Activated naive CD4-positive, alpha-beta T cell treated with anti-CD3 and anti-CD28 coated beads for 36 hours (primary cell): ENCODE measurements at regions of chr12 and their contacts with region 1.

Region 1: GRCh38 chr12:113174461-113175384 is 10.6 kb downstream of the DDX54 start:
- DNase-seq: peak; percentile 86
- H3K4me3 Mint-ChIP-seq: no peak overlapping the region
- H3K27ac Mint-ChIP-seq: no peak overlapping the region
- H3K4me1 Mint-ChIP-seq: no peaks in the 10 kb centered on the region
- H3K27me3 Mint-ChIP-seq: no peaks in the 10 kb centered on the region

Region 2: GRCh38 chr12:113098446-113098896 is 76.3 kb before region 1 on chr12:
- CTCF ChIA-PET with region 1: interaction called, 25 read pairs
- intact Hi-C with region 1: no loop called
- DNase-seq: peak; percentile 88
- H3K4me3 Mint-ChIP-seq: no peak overlapping the region
- H3K27ac Mint-ChIP-seq: no peak overlapping the region
- H3K4me1 Mint-ChIP-seq: peaks cover 18% of the 10 kb centered on the region
- H3K27me3 Mint-ChIP-seq: no peaks in the 10 kb centered on the region

Region 3: GRCh38 chr12:113114447-113115178 is 60.1 kb before region 1 on chr12:
- CTCF ChIA-PET with region 1: no interaction called
- intact Hi-C with region 1: no loop called
- DNase-seq: no peak
- H3K4me3 Mint-ChIP-seq: no peak overlapping the region
- H3K27ac Mint-ChIP-seq: no peak overlapping the region
- H3K4me1 Mint-ChIP-seq: peaks cover 6% of the 10 kb centered on the region
- H3K27me3 Mint-ChIP-seq: no peaks in the 10 kb centered on the region

Region 4: GRCh38 chr12:113135178-113136127 is 39.3 kb before region 1 on chr12 and contains the start of gene RASAL1:
- CTCF ChIA-PET with region 1: interaction called, 11 read pairs
- intact Hi-C with region 1: no loop called
- DNase-seq: peak; percentile 90
- H3K4me3 Mint-ChIP-seq: peak within 1 kb of the TSS; percentile 70
- H3K27ac Mint-ChIP-seq: peak within 1 kb of the TSS; percentile 73
- H3K4me1 Mint-ChIP-seq: peaks cover 18% of the 10 kb centered on the region
- H3K27me3 Mint-ChIP-seq: no peaks in the 10 kb centered on the region
- total RNA-seq, gene RASAL1: 2.6 to 3.2 TPM

Region 5: DNA sequence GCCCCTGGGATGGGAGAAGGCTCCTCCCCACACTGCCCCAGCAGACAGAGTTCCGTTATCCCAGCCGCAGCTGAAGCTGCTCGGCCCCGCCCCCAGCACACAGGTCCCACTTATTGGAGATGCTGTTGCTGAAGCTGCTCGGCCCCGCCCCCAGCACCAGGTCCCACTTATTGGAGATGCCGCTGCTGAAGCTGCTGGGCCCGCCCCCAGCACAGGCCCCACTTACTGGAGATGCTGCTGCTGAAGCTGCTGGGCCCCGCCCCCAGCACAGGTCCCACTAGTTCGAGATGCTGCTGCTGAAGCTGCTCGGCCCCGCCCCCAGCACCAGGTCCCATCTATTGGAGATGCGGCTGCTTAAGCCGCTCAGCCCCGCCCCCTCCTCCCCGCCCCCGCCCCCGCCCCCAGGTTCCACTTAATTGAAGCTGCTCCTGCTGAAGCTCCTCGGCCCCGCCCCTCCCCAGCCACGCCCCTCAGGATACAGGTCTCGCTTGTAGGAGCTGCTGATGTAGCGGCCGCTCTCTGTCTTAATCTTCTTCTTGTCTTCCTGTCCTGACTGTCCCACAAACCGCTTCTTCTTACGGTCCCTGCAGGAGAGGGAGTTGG is 13.2 kb before region 1 on chr12:
- CTCF ChIA-PET with region 1: interaction called, 12 read pairs
- intact Hi-C with region 1: no loop called
- DNase-seq: no peak
- H3K4me3 Mint-ChIP-seq: no peak overlapping the region
- H3K27ac Mint-ChIP-seq: no peak overlapping the region
- H3K4me1 Mint-ChIP-seq: peaks cover 4% of the 10 kb centered on the region
- H3K27me3 Mint-ChIP-seq: no peaks in the 10 kb centered on the region